ENCODE measurements at regions of chr5 and their contacts with region 1.

Region 1: DNA sequence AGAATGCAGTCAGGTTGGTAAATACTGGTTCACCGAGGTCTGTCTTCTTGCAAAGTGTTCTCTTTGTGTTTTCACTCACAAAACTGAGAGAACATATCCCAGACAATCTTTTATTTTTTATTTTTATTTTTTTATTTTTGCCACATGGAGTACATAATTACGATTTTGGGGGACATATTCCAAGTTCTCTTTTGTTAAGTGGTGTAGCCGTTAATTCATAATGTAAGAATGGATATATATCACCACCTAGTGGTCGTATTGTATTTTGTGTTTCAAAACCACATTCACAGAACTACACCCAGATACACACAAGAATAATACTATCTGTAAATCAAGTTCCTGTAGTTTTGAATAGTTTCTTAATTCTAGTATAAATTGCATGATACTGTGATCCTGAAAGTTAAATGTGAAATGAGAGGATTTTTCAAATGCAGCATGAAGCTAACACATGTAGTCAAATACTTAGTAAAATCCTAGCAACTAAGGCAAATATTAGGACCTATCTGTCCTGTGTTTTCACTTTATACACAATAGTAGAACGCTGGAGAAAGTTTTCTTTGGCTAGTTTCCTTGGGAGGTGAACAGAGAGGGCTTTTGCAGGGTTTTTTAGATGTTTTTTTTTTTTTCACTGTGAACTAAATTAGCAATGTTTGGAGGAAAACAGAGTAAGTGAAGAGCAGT is 92.7 kb downstream of the VCAN start:
- DNase-seq: no peak
- H3K4me3 ChIP-seq: no peak overlapping the region
- H3K27ac ChIP-seq: peak overlapping the region in 1 of 2 donors; percentile 51
- H3K4me1 ChIP-seq: peaks cover 0 to 40% (median 14%) of the 10 kb centered on the region in 4 donors
- H3K27me3 ChIP-seq: no peaks in the 10 kb centered on the region
- CTCF ChIP-seq: peak; percentile 66 to 69

Region 2: GRCh38 chr5:82312373-82312856 is 1251.8 kb before region 1 on chr5:
- intact Hi-C with region 1: loop called (anchors 5 kb)
- DNase-seq: peak; percentile 78 to 87
- H3K4me3 ChIP-seq: peak overlapping the region; percentile 13 to 34
- H3K27ac ChIP-seq: peak overlapping the region; percentile 61 to 73
- H3K4me1 ChIP-seq: peaks cover 0 to 24% (median 6%) of the 10 kb centered on the region in 4 donors
- H3K27me3 ChIP-seq: no peaks in the 10 kb centered on the region
- CTCF ChIP-seq: peak; percentile 88 to 91

Region 3: GRCh38 chr5:82351754-82352145 is 1212.5 kb before region 1 on chr5:
- intact Hi-C with region 1: loop called (anchors 10 kb)
- DNase-seq: no peak
- H3K4me3 ChIP-seq: no peak overlapping the region
- H3K27ac ChIP-seq: peak overlapping the region; percentile 68 to 77
- H3K4me1 ChIP-seq: peaks cover 0 to 64% (median 35%) of the 10 kb centered on the region in 4 donors
- H3K27me3 ChIP-seq: no peaks in the 10 kb centered on the region
- CTCF ChIP-seq: peak; percentile 75 to 93

Region 4: DNA sequence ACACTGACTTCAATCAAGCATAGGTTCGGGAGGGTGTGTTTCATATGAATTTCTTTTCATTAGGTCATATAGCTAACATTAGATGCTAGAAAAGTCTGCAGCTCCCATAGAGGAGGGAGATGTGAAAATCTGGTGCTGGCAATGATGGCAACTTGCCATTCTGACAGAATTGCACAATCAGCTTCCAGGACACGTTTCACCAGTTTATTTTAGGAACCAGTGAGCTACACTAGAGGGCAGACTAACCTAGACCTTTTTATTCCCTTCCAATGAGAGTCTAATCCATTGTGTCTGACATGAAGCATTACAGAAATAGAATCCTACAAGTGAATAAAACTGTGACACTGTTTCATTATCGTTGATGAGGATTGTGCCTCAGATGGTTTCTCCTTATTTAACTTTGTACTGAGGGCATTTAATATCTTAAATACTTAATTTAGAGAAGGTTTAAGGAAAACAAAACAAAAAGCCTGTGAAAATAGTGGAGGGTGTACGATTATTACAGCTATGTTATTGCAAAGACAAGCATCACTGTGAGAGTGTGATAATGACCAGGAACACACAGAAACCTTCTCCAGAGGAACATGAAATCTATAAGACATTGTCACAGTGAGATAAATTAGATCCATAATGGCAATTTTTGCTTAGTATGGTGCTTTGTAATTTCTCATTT is 922.7 kb before region 1 on chr5:
- intact Hi-C with region 1: loop called (anchors 5 kb)
- DNase-seq: peak; percentile 83 to 88
- H3K4me3 ChIP-seq: no peak overlapping the region
- H3K27ac ChIP-seq: peak overlapping the region; percentile 64 to 68
- H3K4me1 ChIP-seq: peaks cover 0 to 29% (median 16%) of the 10 kb centered on the region in 4 donors
- H3K27me3 ChIP-seq: no peaks in the 10 kb centered on the region
- CTCF ChIP-seq: peak; percentile 75 to 82

Region 5: GRCh38 chr5:83441747-83442146 is 122.5 kb before region 1 on chr5:
- intact Hi-C with region 1: no loop called
- DNase-seq: no peak
- H3K4me3 ChIP-seq: no peak overlapping the region
- H3K27ac ChIP-seq: no peak overlapping the region
- H3K4me1 ChIP-seq: no peaks in the 10 kb centered on the region
- H3K27me3 ChIP-seq: no peaks in the 10 kb centered on the region
- CTCF ChIP-seq: no peak

Region 6: DNA sequence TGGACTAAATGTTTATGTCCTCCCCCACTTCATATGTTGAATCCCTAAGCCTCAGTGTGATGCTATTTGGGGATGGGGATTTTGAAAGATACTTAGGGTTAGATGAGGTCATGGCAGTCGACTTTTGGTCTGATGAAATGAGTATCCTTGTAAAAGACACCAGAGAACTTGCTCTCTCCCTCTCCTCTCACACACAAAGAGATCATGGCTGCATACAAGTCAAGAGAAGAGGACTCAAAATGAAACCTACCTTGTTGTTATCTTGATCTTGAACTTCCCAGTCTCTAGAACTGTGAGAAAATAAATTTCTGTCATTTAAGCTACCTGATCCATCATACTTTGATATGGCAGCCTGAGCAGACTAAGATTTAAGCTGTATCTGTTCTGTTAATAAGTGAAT is 300.4 kb after region 1 on chr5:
- intact Hi-C with region 1: no loop called
- DNase-seq: no peak
- H3K4me3 ChIP-seq: no peak overlapping the region
- H3K27ac ChIP-seq: no peak overlapping the region
- H3K4me1 ChIP-seq: no peaks in the 10 kb centered on the region
- H3K27me3 ChIP-seq: no peaks in the 10 kb centered on the region
- CTCF ChIP-seq: no peak